Right ventricle myocardium inferior (tissue), 1 donor: ENCODE measurements at regions of chr3 and their contacts with region 1.

Region 1: DNA sequence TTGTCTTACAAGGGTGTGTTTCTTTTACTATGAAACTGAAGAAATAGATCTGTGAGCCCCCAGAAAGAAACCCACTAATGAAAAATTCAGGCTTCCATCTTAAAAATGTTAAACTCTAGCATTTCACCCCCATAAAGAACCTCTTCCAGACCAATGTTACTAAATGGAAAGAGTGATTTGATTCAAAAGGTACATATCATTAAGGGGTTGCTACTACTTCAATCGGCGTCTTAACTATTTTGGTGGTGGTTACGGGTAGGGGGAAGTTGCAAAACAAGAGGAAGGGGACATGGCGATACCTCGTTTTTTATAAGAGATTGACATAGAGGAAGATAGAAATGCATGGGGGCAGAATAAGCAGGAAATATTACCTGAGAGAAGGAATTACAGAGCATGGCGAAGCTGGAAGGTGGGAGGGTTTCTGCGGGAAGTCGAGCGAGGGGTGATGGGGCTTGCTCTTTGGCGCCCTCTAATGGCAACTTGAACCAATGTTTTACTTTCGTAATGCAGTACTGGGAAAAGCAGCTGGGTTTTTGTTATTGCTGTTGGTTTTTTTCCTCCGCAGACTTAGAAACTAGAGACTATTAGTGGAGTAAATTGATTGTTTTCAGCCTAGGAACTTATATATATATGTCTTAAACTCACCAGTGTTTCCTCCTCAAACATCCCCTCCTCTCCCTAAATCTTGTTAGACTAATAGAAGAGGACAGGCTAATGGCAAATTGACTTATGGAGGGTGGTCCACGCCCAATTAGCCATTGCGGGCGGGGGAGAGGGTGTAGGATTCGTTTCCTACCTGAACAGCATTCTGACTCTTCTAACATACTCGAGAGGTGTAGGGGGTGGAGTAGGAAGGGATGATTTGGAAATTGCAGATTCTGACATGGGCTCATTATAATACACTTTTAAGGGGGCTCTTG is 11.3 kb upstream of the SOX2 start:
- DNase-seq: no peak
- ATAC-seq: peak; percentile 78

Region 2: DNA sequence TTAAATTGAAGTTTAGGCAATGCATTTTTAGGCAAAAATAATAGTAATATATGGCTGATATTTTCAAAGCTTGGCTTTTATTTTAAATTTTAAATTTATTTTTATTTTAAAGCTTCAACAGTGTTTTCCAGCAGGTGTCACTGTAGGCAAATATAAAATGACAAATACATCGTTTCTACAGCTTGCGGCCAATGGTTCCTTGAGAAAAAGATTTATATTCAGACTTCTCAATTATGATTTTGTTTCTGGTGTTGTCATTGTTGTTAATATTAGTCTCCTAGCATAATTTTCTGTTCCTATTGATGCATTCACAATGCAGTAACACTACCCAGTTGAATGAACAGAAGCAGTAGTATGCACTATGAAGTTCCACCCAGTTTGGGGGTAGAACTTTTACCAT is 490.2 kb before region 1 on chr3:
- intact Hi-C with region 1: loop called (anchors 5 kb)
- DNase-seq: no peak
- ATAC-seq: no peak

Region 3: GRCh38 chr3:181326637-181327223 is 373.7 kb before region 1 on chr3:
- intact Hi-C with region 1: loop called (anchors 1 kb)
- DNase-seq: no peak
- ATAC-seq: no peak

Region 4: GRCh38 chr3:181610083-181610972 is 90.1 kb before region 1 on chr3:
- intact Hi-C with region 1: no loop called
- DNase-seq: no peak
- ATAC-seq: no peak

Region 5: GRCh38 chr3:181726351-181727330 is 26.2 kb after region 1 on chr3:
- intact Hi-C with region 1: no loop called
- DNase-seq: no peak
- ATAC-seq: no peak

Region 6: DNA sequence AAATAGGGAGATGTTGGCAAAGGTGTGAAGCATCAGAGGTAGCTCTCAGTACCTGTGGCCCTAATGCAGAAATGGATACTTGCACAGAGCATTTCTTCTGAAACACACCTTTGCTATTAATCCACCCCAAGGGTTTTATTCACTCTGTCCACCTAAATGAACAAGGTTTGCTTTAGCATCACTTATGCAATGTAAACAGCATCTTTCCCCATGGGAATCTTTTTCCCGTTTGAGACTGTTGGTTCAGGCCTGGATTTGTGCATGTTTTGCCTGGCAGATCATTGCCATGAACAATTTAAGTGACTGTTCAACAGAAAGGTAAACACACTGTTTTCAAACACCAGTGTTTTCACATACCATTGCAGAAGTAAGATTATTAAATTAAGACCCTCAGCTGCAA is 519.6 kb after region 1 on chr3:
- intact Hi-C with region 1: no loop called
- DNase-seq: no peak
- ATAC-seq: no peak